CD4-positive, alpha-beta memory T cell (primary cell): ENCODE measurements at regions of chr1 and their contacts with region 1.

Region 1: GRCh38 chr1:76154206-76154956 is 79.8 kb downstream of the ST6GALNAC3 start:
- DNase-seq: peak; percentile 67 to 78 (median 77)
- H3K4me3 ChIP-seq: peak overlapping the region; percentile 24 to 60
- H3K4me3 Mint-ChIP-seq: peak overlapping the region; percentile 89 to 96 (median 92)
- H3K27ac ChIP-seq: peak overlapping the region; percentile 40
- H3K27ac Mint-ChIP-seq: peak overlapping the region; percentile 69 to 97 (median 91)
- H3K4me1 ChIP-seq: peaks cover 7% of the 10 kb centered on the region
- H3K4me1 Mint-ChIP-seq: peaks cover 5 to 13% (median 7%) of the 10 kb centered on the region in 4 donors
- H3K27me3 ChIP-seq: no peaks in the 10 kb centered on the region
- H3K27me3 Mint-ChIP-seq: peaks cover 2 to 5% of the 10 kb centered on the region in 2 donors

Region 2: GRCh38 chr1:75991497-75992114 is 162.8 kb before region 1 on chr1:
- CTCF ChIA-PET with region 1: no interaction called
- POLR2A ChIA-PET with region 1: no interaction called
- intact Hi-C with region 1: loop called (anchors 10 kb)
- DNase-seq: peak; percentile 37 to 45 (median 40)
- H3K4me3 ChIP-seq: no peak overlapping the region
- H3K4me3 Mint-ChIP-seq: no peak overlapping the region
- H3K27ac ChIP-seq: no peak overlapping the region
- H3K27ac Mint-ChIP-seq: no peak overlapping the region
- H3K4me1 ChIP-seq: no peaks in the 10 kb centered on the region
- H3K4me1 Mint-ChIP-seq: no peaks in the 10 kb centered on the region
- H3K27me3 ChIP-seq: no peaks in the 10 kb centered on the region
- H3K27me3 Mint-ChIP-seq: peaks cover 2 to 3% of the 10 kb centered on the region in 2 donors

Region 3: GRCh38 chr1:76170513-76170912 is 16.1 kb after region 1 on chr1:
- CTCF ChIA-PET with region 1: interaction called, 22 read pairs
- POLR2A ChIA-PET with region 1: no interaction called
- intact Hi-C with region 1: no loop called
- DNase-seq: no peak
- H3K4me3 ChIP-seq: no peak overlapping the region
- H3K4me3 Mint-ChIP-seq: no peak overlapping the region
- H3K27ac ChIP-seq: no peak overlapping the region
- H3K27ac Mint-ChIP-seq: no peak overlapping the region
- H3K4me1 ChIP-seq: no peaks in the 10 kb centered on the region
- H3K4me1 Mint-ChIP-seq: peaks cover 0 to 4% (median 1%) of the 10 kb centered on the region in 4 donors
- H3K27me3 ChIP-seq: no peaks in the 10 kb centered on the region
- H3K27me3 Mint-ChIP-seq: no peaks in the 10 kb centered on the region

Region 4: GRCh38 chr1:76330991-76331603 is 176.7 kb after region 1 on chr1:
- CTCF ChIA-PET with region 1: interaction called, 13 read pairs
- POLR2A ChIA-PET with region 1: no interaction called
- intact Hi-C with region 1: loop called (anchors 1 kb)
- DNase-seq: peak; percentile 35 to 42 (median 36)
- H3K4me3 ChIP-seq: no peak overlapping the region
- H3K4me3 Mint-ChIP-seq: no peak overlapping the region
- H3K27ac ChIP-seq: no peak overlapping the region
- H3K27ac Mint-ChIP-seq: no peak overlapping the region
- H3K4me1 ChIP-seq: no peaks in the 10 kb centered on the region
- H3K4me1 Mint-ChIP-seq: peaks cover 0 to 6% (median 5%) of the 10 kb centered on the region in 4 donors
- H3K27me3 ChIP-seq: no peaks in the 10 kb centered on the region
- H3K27me3 Mint-ChIP-seq: no peaks in the 10 kb centered on the region

Region 5: GRCh38 chr1:76901158-76901767 is 746.9 kb after region 1 on chr1:
- CTCF ChIA-PET with region 1: no interaction called
- POLR2A ChIA-PET with region 1: no interaction called
- intact Hi-C with region 1: loop called (anchors 1 kb)
- DNase-seq: peak in 4 of 5 donors; percentile 10 to 19 (median 16)
- H3K4me3 ChIP-seq: no peak overlapping the region
- H3K4me3 Mint-ChIP-seq: no peak overlapping the region
- H3K27ac ChIP-seq: no peak overlapping the region
- H3K27ac Mint-ChIP-seq: no peak overlapping the region
- H3K4me1 ChIP-seq: no peaks in the 10 kb centered on the region
- H3K4me1 Mint-ChIP-seq: no peaks in the 10 kb centered on the region
- H3K27me3 ChIP-seq: no peaks in the 10 kb centered on the region
- H3K27me3 Mint-ChIP-seq: peaks cover 0 to 2% of the 10 kb centered on the region in 2 donors

Region 6: GRCh38 chr1:77143529-77144121 is 989.2 kb after region 1 on chr1:
- CTCF ChIA-PET with region 1: interaction called, 26 read pairs
- POLR2A ChIA-PET with region 1: no interaction called
- intact Hi-C with region 1: no loop called
- DNase-seq: peak in 3 of 5 donors; percentile 7 to 16 (median 8)
- H3K4me3 ChIP-seq: no peak overlapping the region
- H3K4me3 Mint-ChIP-seq: no peak overlapping the region
- H3K27ac ChIP-seq: no peak overlapping the region
- H3K27ac Mint-ChIP-seq: no peak overlapping the region
- H3K4me1 ChIP-seq: peaks cover 4% of the 10 kb centered on the region
- H3K4me1 Mint-ChIP-seq: peaks cover 3 to 6% (median 4%) of the 10 kb centered on the region in 4 donors
- H3K27me3 ChIP-seq: no peaks in the 10 kb centered on the region
- H3K27me3 Mint-ChIP-seq: no peaks in the 10 kb centered on the region